ENCODE measurements at regions of chr20 and their contacts with region 1.

Region 1: GRCh38 chr20:33992923-33993575 is 662 bp upstream of the RALY start:
- DNase-seq: peak; percentile 96 to 98 (median 98)
- H3K4me3 ChIP-seq: peak overlapping the region; percentile 72 to 99 (median 98)
- H3K4me3 Mint-ChIP-seq: peak overlapping the region; percentile 92 to 99
- H3K27ac ChIP-seq: peak overlapping the region; percentile 82 to 94
- H3K27ac Mint-ChIP-seq: peak overlapping the region; percentile 94 to 99 (median 98)
- H3K4me1 ChIP-seq: peaks cover 34 to 51% of the 10 kb centered on the region in 2 donors
- H3K4me1 Mint-ChIP-seq: peaks cover 52% of the 10 kb centered on the region
- H3K27me3 ChIP-seq: no peaks in the 10 kb centered on the region
- H3K27me3 Mint-ChIP-seq: peaks cover 0 to 7% (median 1%) of the 10 kb centered on the region in 3 donors
- CTCF ChIP-seq: no peak

Region 2: GRCh38 chr20:33489495-33490022 is 503.5 kb before region 1 on chr20:
- intact Hi-C with region 1: loop called (anchors 5 kb)
- DNase-seq: peak; percentile 98
- H3K4me3 ChIP-seq: peak overlapping the region; percentile 58 to 72 (median 61)
- H3K4me3 Mint-ChIP-seq: peak overlapping the region; percentile 78 to 81
- H3K27ac ChIP-seq: peak overlapping the region; percentile 91 to 97
- H3K27ac Mint-ChIP-seq: peak overlapping the region; percentile 91 to 97 (median 94)
- H3K4me1 ChIP-seq: peaks cover 12 to 15% of the 10 kb centered on the region in 2 donors
- H3K4me1 Mint-ChIP-seq: peaks cover 18% of the 10 kb centered on the region
- H3K27me3 ChIP-seq: no peaks in the 10 kb centered on the region
- H3K27me3 Mint-ChIP-seq: peaks cover 0 to 2% (median 0%) of the 10 kb centered on the region in 3 donors
- CTCF ChIP-seq: no peak

Region 3: DNA sequence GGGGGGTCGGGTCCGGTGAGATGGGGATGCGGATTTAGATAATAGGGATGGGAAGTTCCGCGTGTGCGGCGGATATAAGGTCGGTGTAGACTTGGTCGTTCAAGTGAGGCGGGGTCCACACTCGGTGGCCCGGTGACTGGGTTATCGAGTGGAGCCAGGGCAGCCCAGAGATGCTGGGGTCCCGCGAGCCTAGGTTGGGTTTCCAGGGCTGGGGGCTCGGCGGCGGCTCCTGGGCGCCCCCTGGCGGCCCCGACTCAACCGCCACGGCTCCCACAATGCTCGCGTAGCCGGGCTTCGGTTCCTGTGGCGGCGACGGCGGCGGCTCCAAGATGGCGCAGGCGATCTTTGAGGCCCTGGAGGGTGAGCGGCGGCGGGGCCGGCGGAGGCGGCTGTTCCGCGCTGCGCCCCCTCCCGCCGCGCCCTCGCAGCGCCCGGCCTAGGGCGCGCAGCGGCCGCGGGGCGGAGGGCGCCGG is 261.3 kb before region 1 on chr20 and contains the start of gene ZNF341:
- intact Hi-C with region 1: loop called in 1 of 2 experiments (anchors 5 kb)
- DNase-seq: peak; percentile 85 to 89 (median 87)
- H3K4me3 ChIP-seq: peak within 1 kb of the TSS; percentile 50 to 86 (median 86)
- H3K4me3 Mint-ChIP-seq: peak within 1 kb of the TSS; percentile 85 to 96
- H3K27ac ChIP-seq: peak within 1 kb of the TSS; percentile 83 to 84
- H3K27ac Mint-ChIP-seq: peak within 1 kb of the TSS; percentile 88 to 97 (median 95)
- H3K4me1 ChIP-seq: peaks cover 35 to 42% of the 10 kb centered on the region in 2 donors
- H3K4me1 Mint-ChIP-seq: peaks cover 34% of the 10 kb centered on the region
- H3K27me3 ChIP-seq: no peaks in the 10 kb centered on the region
- H3K27me3 Mint-ChIP-seq: peaks cover 0 to 2% (median 2%) of the 10 kb centered on the region in 3 donors
- CTCF ChIP-seq: peak; percentile 92
- polyA plus RNA-seq, gene ZNF341: 1.1 to 10.3 (median 2.3) TPM

Region 4: GRCh38 chr20:33954504-33954903 is 38.5 kb before region 1 on chr20:
- intact Hi-C with region 1: no loop called
- DNase-seq: no peak
- H3K4me3 ChIP-seq: no peak overlapping the region
- H3K4me3 Mint-ChIP-seq: no peak overlapping the region
- H3K27ac ChIP-seq: no peak overlapping the region
- H3K27ac Mint-ChIP-seq: no peak overlapping the region
- H3K4me1 ChIP-seq: no peaks in the 10 kb centered on the region
- H3K4me1 Mint-ChIP-seq: no peaks in the 10 kb centered on the region
- H3K27me3 ChIP-seq: no peaks in the 10 kb centered on the region
- H3K27me3 Mint-ChIP-seq: peaks cover 0 to 2% (median 0%) of the 10 kb centered on the region in 3 donors
- CTCF ChIP-seq: no peak

Region 5: GRCh38 chr20:34083137-34083536 is 90.1 kb after region 1 on chr20:
- intact Hi-C with region 1: no loop called
- DNase-seq: no peak
- H3K4me3 ChIP-seq: no peak overlapping the region
- H3K4me3 Mint-ChIP-seq: no peak overlapping the region
- H3K27ac ChIP-seq: peak overlapping the region in 1 of 2 donors; percentile 15
- H3K27ac Mint-ChIP-seq: peak overlapping the region in 1 of 7 donors; percentile 79
- H3K4me1 ChIP-seq: no peaks in the 10 kb centered on the region
- H3K4me1 Mint-ChIP-seq: peaks cover 2% of the 10 kb centered on the region
- H3K27me3 ChIP-seq: no peaks in the 10 kb centered on the region
- H3K27me3 Mint-ChIP-seq: no peaks in the 10 kb centered on the region
- CTCF ChIP-seq: no peak

Region 6: DNA sequence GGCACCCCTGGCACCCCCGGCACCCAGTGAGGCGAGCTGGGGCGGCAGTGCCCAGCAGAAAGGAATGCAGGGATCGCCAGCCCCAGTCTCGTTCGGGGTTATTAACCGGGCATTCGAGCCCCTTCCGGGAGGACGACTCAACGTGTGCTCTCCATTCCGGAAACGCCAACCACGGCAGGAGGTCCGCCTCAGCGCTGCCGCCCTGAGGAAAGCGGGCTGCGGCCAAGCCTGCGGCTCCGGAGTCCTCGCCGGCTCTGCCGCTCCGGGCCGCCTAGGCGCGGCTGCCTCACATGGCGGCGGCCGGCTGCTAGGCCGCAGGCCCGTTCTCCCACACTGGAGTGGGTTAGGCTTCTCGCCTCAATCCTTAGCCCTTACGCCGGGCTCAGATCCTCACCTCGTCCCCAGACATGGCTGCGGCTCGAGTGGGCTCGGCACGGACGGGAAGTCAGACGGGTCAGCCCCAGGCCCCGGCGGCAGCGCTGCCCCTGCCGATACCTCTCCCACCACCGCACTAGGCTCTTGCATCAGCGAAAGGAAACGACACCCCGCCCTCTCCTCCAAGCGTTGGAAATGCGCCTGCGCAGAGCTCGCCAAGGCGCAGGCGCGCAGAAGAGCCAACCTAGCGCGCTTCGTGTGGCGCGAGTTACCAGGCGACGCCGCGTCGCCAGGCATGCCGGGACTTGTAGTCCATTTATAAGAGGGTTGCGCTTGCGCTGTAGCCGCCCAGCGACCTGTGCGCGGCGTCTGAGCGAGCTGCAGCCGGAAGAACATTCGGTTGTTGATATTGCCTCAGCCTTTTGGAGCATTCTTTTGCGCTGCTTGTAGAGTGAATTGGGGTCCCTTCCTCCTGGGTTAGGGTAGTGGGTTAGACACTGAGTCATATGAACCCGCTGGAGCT is 118.9 kb after region 1 on chr20 and contains the start of gene EIF2S2:
- intact Hi-C with region 1: loop called (anchors 2 to 10 kb)
- DNase-seq: peak; percentile 99 to 100 (median 100)
- H3K4me3 ChIP-seq: peak within 1 kb of the TSS; percentile 88 to 99 (median 93)
- H3K4me3 Mint-ChIP-seq: peak within 1 kb of the TSS; percentile 93 to 97
- H3K27ac ChIP-seq: peak within 1 kb of the TSS; percentile 94
- H3K27ac Mint-ChIP-seq: peak within 1 kb of the TSS; percentile 91 to 97 (median 95)
- H3K4me1 ChIP-seq: peaks cover 19 to 39% of the 10 kb centered on the region in 2 donors
- H3K4me1 Mint-ChIP-seq: peaks cover 37% of the 10 kb centered on the region
- H3K27me3 ChIP-seq: no peaks in the 10 kb centered on the region
- H3K27me3 Mint-ChIP-seq: no peaks in the 10 kb centered on the region
- CTCF ChIP-seq: no peak
- polyA plus RNA-seq, gene EIF2S2: 18.8 to 20.1 (median 18.9) TPM

Region 7: GRCh38 chr20:35619196-35620095 is 1626.4 kb after region 1 on chr20:
- intact Hi-C with region 1: loop called in 1 of 2 experiments (anchors 5 kb)
- DNase-seq: peak; percentile 26 to 58 (median 34)
- H3K4me3 ChIP-seq: peak overlapping the region; percentile 7 to 74 (median 39)
- H3K4me3 Mint-ChIP-seq: peak overlapping the region; percentile 80 to 97
- H3K27ac ChIP-seq: no peak overlapping the region
- H3K27ac Mint-ChIP-seq: peak overlapping the region in 1 of 7 donors; percentile 46
- H3K4me1 ChIP-seq: peaks cover 36 to 47% of the 10 kb centered on the region in 2 donors
- H3K4me1 Mint-ChIP-seq: peaks cover 42% of the 10 kb centered on the region
- H3K27me3 ChIP-seq: peaks cover 16 to 32% of the 10 kb centered on the region in 2 donors
- H3K27me3 Mint-ChIP-seq: peaks cover 38 to 45% (median 39%) of the 10 kb centered on the region in 3 donors
- CTCF ChIP-seq: peak; percentile 66